ENCODE measurements at regions of chr12 and their contacts with region 1.

Region 1: DNA sequence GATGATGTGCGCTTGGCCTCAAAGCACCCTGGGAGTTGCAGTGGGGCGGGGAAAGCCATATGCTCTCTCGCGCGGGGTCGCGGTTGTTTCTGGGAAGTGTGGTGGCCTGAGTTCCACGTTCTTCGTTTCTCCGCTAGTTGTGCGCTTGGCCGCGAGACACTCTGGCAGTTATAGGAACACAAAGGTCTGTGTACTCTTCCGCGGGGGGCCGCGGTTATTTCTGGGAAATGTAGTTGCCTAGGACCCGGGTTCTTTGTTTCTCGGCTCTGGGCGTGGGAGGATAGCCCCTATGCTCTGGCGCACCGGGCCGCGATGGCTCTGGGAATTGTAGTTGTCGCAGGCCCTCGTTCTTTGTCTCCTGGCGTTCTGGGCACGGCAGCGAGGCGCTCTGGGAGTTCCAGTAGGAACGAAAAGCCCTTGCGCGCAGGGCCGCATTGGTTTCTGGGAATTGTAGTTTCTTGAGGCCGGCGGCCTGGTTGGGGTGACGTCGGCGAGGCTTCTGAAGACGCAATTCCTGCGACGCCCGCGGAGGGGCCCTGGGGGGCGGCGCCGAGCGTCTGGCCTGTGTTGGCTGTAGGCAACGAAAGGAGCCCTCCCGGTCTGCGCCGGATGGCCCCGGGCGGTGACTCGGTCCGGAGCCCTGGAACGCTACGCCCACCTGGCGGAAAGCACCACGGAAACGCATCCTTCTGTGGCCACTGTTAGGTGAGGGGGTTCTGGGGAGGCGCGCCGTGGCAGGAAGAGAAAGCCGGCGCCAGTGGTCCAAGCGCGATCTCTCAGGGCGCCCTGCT is at the start of gene ZNF140:
- DNase-seq: peak; percentile 93
- H3K4me3 Mint-ChIP-seq: no peak within 1 kb of the TSS
- H3K27ac Mint-ChIP-seq: no peak within 1 kb of the TSS
- H3K4me1 Mint-ChIP-seq: peaks cover 3% of the 10 kb centered on the region
- H3K27me3 Mint-ChIP-seq: no peaks in the 10 kb centered on the region
- total RNA-seq, gene ZNF140: 14.4 and 15.3 TPM in 2 replicates

Region 2: DNA sequence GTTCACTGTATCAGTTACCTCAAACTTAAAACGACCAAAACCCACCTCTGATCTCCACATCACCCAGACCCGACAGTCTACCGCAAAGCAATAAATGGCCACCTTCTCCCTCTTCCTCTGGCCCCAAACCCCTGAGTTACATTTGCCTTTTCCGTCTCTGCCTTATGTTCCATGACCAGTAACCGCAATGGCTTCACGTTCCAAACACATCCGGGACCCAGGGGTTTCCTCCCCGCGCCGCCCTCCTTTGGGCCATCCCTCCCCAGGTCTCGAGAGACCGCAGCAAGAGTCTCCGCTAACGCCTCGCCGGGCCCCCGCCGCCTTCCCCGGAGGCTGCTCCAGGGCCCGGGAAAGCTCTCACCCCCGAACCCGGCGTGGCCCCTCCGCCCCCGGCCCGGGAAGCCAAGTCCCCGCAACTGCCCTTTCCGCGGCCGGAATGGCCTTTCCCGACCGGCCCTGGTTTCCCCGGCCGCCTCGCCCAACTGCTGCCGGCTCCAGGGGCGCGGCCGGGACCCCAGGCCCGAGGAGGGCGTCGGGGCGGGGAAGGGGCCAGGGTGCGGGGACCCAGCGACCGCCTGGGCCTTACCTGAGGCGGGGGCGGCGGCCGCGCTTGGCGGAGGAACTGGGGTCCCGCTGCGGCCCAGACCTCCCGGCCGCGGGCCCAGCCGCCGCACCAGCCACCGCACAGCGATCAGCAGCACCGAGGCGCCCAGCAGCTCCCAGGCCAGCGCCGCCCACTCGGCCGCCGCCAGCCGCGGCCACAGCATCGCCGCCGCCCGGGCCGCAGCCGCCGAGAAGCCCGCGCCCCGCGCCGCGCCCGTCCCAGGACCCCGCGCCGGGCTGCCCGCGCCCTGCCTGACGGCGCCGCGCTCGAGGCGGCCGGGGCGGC is 319.3 kb before region 1 on chr12 and contains the start of gene ANKLE2:
- intact Hi-C with region 1: loop called (anchors 5 kb)
- DNase-seq: peak; percentile 74
- H3K4me3 Mint-ChIP-seq: peak within 1 kb of the TSS; percentile 94
- H3K27ac Mint-ChIP-seq: peak within 1 kb of the TSS; percentile 97
- H3K4me1 Mint-ChIP-seq: peaks cover 19% of the 10 kb centered on the region
- H3K27me3 Mint-ChIP-seq: no peaks in the 10 kb centered on the region
- total RNA-seq, gene ANKLE2: 143 and 152 TPM in 2 replicates

Region 3: DNA sequence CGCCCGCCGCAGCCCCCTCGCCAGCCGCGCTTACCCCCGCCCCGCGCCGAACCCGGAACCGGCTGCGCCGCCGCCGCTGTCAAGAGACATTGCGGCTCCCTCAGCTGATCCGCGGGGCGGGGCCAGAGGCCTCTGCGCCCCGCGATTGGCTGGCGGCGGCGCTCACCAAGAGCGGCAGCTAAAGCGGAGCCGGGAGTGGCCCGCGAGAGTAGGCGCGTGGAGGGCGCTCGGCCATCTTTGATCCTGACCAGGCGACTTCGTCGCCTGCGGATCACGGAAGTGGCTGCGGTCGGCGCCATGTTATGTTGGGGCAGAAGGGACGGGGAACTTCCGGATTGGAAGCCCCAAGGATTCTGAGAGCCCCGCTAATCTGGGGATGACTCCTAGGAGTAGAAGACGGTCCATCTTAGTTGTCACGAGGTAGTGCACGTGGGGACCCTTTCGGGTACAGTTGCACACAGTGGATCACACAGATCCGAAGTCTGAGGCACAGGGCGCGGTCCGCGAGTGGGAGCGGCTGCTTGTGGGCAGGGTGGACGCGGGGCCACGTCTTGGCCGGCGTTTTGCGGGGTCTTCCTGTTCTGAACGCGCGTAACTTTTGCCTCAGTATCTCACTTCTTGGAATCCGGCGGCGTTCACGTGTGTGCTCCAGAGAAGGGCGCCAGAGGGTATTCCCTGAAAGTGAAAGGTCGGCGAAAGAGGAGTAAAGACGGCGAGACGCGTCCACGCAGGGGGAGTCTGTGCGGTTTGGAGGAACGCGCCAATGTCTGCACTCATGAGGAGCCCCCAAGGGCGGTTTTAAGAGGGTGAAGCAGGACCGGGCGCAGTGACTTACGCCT is 192.8 kb before region 1 on chr12 and contains the start of gene CHFR:
- intact Hi-C with region 1: loop called (anchors 1 kb)
- DNase-seq: peak; percentile 94
- H3K4me3 Mint-ChIP-seq: peak within 1 kb of the TSS; percentile 97
- H3K27ac Mint-ChIP-seq: peak within 1 kb of the TSS; percentile 99
- H3K4me1 Mint-ChIP-seq: peaks cover 13% of the 10 kb centered on the region
- H3K27me3 Mint-ChIP-seq: peaks cover 3% of the 10 kb centered on the region
- total RNA-seq, gene CHFR: 55.0 and 59.9 TPM in 2 replicates

Region 4: GRCh38 chr12:132956011-132956788 is 124.4 kb before region 1 on chr12 and contains the start of gene ZNF605:
- intact Hi-C with region 1: loop called (anchors 1 kb)
- DNase-seq: peak; percentile 82
- H3K4me3 Mint-ChIP-seq: peak within 1 kb of the TSS; percentile 96
- H3K27ac Mint-ChIP-seq: peak within 1 kb of the TSS; percentile 96
- H3K4me1 Mint-ChIP-seq: peaks cover 12% of the 10 kb centered on the region
- H3K27me3 Mint-ChIP-seq: no peaks in the 10 kb centered on the region
- total RNA-seq, gene ZNF605: 7.3 and 8.2 TPM in 2 replicates

Region 5: GRCh38 chr12:133037207-133038005 is 43.2 kb before region 1 on chr12 and contains the start of gene ZNF84:
- intact Hi-C with region 1: loop called (anchors 1 kb)
- DNase-seq: peak; percentile 97
- H3K4me3 Mint-ChIP-seq: peak within 1 kb of the TSS; percentile 88
- H3K27ac Mint-ChIP-seq: peak within 1 kb of the TSS; percentile 98
- H3K4me1 Mint-ChIP-seq: peaks cover 6% of the 10 kb centered on the region
- H3K27me3 Mint-ChIP-seq: no peaks in the 10 kb centered on the region
- total RNA-seq, gene ZNF84: 20.7 and 21.3 TPM in 2 replicates

Region 6: DNA sequence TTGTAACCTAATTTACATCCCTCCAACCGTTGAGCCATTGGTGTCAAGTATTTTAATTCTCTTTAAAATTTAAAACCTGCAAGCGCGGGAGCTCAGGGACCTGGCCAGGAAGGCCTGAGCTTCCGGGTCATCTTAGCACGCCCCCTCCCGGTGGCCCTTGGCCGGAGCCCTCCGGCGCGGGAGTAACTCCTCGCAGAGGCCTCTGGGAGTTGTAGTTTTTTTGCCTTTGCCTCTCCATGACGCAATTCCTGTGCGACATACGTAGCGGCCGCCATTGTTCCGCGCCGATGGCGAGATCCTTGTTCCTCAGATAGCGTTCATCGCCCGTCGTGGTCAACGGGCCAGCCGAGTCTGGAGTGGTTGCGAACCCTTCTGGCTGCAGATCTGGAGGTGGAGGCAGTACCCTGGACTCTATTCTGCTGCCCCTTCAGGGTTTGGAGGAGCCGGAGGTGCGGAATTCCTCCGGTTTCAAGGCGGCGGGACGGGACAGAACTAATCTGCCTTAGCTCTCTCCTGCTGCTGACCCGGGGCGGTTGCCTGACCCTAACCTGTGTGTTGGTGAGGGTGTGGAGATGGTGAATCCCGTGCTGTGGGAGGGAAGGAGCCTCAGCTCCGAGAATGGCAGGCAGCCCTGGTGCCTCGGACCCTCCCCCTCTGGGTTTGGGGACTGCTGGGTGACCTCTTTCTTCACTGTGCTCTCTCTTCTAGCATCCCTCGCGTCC is 100.8 kb after region 1 on chr12 and contains the start of gene ZNF268:
- intact Hi-C with region 1: loop called (anchors 1 kb)
- DNase-seq: peak; percentile 88
- H3K4me3 Mint-ChIP-seq: peak within 1 kb of the TSS; percentile 99
- H3K27ac Mint-ChIP-seq: peak within 1 kb of the TSS; percentile 95
- H3K4me1 Mint-ChIP-seq: peaks cover 1% of the 10 kb centered on the region
- H3K27me3 Mint-ChIP-seq: no peaks in the 10 kb centered on the region
- total RNA-seq, gene ZNF268: 12.7 and 17.2 TPM in 2 replicates

Measured in activated T-helper 2 cell treated with anti-CD3 and anti-CD28 coated beads, Interferon-gamma antibody, Interleukin-2, Interleukin-4, amounts not matched to agents 10 μg/mL and 5 μg/mL and 100 μg/mL, durations not matched to agents 14 hours and 24 hours and 36 hours (primary cell).